Heart right ventricle (tissue), 16 donors: ENCODE measurements at regions of chr11 and their contacts with region 1.

Region 1: DNA sequence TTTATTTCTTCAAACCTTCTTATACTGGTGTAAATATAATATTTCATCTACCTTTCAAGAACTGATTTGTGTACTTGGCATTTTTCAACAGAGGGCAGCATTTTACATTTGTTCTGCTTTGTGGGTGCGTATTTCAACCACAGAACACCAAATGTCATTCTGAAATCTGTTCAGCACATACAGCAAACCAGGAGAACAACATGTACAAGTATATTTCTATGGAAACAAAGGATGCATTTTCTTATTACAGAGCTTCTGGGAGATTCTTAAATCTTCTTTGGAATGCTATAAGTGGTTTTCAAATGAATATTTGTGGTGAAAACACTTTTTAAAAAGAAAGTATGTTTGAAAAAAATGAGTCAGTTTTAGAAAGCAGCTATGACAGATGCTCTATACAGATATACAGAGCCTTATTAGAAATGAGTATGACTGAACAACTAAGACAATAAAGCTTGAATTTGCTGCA is 946.0 kb downstream of the FAM181B start:
- DNase-seq: no peak
- ATAC-seq: no peak
- H3K4me3 ChIP-seq: no peak overlapping the region
- H3K27ac ChIP-seq: no peak overlapping the region
- H3K4me1 ChIP-seq: no peaks in the 10 kb centered on the region
- H3K27me3 ChIP-seq: no peaks in the 10 kb centered on the region
- CTCF ChIP-seq: no peak

Region 2: DNA sequence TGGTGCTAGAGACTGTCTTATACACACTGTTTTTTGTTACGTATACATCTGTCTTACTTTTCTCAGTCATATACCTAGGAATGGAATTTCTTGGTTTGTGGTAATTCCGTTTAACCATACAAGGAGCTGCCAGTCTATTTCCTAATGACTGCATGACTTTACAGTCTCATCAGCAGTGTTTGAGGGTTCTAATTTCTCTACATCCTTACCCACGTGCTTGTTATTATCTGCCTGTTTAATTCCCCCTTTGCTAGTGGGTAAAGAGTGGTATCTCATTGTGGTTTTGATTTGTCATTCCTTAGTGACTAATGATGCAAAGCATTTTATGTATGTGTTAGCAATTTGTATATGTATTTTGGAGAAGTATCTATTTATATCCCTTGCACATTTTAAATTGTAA is 61.9 kb before region 1 on chr11:
- intact Hi-C with region 1: no loop called
- DNase-seq: no peak
- ATAC-seq: no peak
- H3K4me3 ChIP-seq: no peak overlapping the region
- H3K27ac ChIP-seq: no peak overlapping the region
- H3K4me1 ChIP-seq: no peaks in the 10 kb centered on the region
- H3K27me3 ChIP-seq: no peaks in the 10 kb centered on the region
- CTCF ChIP-seq: no peak

Region 3: GRCh38 chr11:81744336-81745116 is 43.1 kb before region 1 on chr11:
- intact Hi-C with region 1: no loop called
- DNase-seq: no peak
- ATAC-seq: no peak
- H3K4me3 ChIP-seq: no peak overlapping the region
- H3K27ac ChIP-seq: no peak overlapping the region
- H3K4me1 ChIP-seq: no peaks in the 10 kb centered on the region
- H3K27me3 ChIP-seq: no peaks in the 10 kb centered on the region
- CTCF ChIP-seq: no peak

Region 4: DNA sequence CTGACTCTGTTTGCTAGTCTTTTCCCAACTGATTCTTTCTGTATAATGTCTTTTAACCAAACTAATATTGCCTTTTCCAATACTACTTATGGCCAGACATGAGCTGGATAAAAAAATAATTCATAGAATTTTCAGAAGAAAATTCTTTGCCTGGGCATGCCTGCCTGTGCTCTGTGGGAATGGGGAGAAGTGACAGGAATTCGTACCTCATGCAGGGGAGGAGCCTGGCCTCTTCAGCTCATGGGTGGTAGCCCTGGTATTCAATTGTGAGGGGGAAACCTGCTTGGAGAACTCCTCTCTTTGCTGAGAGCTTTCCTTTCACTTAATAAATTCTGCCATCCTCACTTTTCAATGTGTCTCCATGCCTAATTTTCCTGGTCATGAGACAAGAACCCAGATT is 17.2 kb after region 1 on chr11:
- intact Hi-C with region 1: loop called in 1 of 10 experiments (anchors 2 kb)
- DNase-seq: no peak
- ATAC-seq: no peak
- H3K4me3 ChIP-seq: no peak overlapping the region
- H3K27ac ChIP-seq: no peak overlapping the region
- H3K4me1 ChIP-seq: no peaks in the 10 kb centered on the region
- H3K27me3 ChIP-seq: no peaks in the 10 kb centered on the region
- CTCF ChIP-seq: no peak